ENCODE measurements at regions of chr13 and their contacts with region 1.

Region 1: GRCh38 chr13:20160847-20161274 is at the start of gene GJA3:
- DNase-seq: peak; percentile 71
- ATAC-seq: peak; percentile 87
- total RNA-seq, gene GJA3: 13.9 TPM

Region 2: GRCh38 chr13:19940106-19940505 is 220.8 kb before region 1 on chr13:
- intact Hi-C with region 1: no loop called
- DNase-seq: no peak
- ATAC-seq: no peak

Region 3: GRCh38 chr13:20035130-20035529 is 125.7 kb before region 1 on chr13:
- intact Hi-C with region 1: loop called (anchors 10 kb)
- DNase-seq: no peak
- ATAC-seq: no peak

Region 4: GRCh38 chr13:20090349-20090748 is 70.5 kb before region 1 on chr13:
- intact Hi-C with region 1: loop called (anchors 10 kb)
- DNase-seq: no peak
- ATAC-seq: peak; percentile 57

Region 5: DNA sequence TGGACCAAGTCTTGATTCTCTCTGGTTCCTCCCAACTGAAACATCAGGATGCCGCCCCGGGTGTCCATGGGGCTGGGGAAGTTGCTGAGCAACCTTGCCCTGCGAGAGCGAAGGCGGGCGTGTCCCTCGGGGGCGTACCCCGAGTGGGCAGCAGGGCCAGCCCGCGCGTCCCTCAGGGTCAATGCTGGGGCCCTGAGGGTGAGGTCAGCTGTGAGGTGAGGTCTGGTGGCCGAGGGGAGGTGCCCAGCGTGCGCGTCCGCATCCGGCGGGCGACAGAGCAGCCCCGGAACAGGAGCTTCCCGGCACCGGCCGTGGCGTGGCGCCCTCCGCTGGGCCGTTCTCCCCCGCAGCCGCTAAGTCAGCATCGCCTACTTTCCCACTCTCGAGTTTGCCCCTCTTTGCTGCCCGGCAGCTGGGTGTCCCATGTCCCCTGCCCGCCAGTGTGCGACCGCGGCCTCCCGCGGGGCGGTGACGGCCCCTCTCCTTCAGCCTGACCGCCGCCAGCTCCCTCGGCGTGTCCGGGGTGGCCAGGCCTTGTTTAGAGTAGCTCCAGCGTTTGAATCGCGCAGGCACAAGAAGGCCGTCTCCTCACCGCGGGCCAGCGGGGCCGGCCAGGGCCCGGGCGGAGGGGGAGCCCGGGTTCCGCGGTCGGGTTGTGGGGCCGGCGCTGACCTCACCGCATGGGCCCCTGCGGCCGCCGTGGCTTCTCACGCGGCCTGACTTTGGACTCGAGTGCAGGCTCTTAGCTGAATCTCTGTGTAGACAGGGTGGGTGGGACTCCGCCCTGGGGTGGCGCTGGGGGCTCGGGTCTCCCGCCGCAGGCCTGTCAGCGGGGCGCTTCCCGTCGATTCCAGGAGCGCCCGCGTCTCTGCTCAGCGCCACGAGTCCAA is 33.0 kb before region 1 on chr13:
- intact Hi-C with region 1: loop called (anchors 5 kb)
- DNase-seq: peak; percentile 84
- ATAC-seq: peak; percentile 87

Measured in Right ventricle myocardium superior (tissue), 1 donor.